ENCODE measurements at regions of chr11 and their contacts with region 1.

Region 1: DNA sequence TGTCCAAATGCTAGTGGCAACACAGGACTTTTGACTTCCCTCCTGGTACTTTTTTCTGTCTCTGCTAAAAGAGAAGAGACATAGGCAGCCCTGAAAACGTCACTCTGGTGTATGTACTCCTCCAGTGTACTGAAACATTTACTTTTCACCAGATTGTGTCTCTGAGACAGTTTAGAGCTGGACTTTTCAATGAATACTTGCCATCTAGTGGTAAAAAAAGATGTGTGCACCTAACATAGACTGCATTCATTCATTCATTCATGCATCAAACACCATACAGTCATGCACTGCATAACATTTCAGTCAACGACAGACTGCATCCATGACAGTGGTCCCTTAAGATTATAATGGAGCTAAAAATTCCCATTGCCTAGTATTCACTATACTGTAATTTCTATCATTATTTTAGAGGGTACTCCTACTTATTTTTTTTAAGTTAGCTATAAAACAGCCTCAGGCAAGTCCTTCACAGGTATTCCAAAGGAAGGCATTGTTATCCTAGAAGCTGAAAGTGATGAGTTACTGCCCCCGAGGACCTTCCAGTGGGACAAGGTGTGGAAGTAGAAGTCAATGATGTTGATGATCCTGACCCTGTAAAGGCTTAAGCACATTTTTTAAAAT is 186.2 kb downstream of the SPON1 start:
- DNase-seq: no peak
- ATAC-seq: peak; percentile 66
- H3K4me3 Mint-ChIP-seq: no peak overlapping the region
- H3K27ac Mint-ChIP-seq: no peak overlapping the region
- H3K4me1 Mint-ChIP-seq: peaks cover 12% of the 10 kb centered on the region
- H3K27me3 Mint-ChIP-seq: no peaks in the 10 kb centered on the region
- CTCF ChIP-seq: peak; percentile 63

Region 2: GRCh38 chr11:13772223-13773046 is 376.3 kb before region 1 on chr11:
- CTCF ChIA-PET with region 1: interaction called, 26 read pairs
- POLR2A ChIA-PET with region 1: no interaction called
- intact Hi-C with region 1: loop called (anchors 10 kb)
- DNase-seq: peak; percentile 8
- ATAC-seq: peak; percentile 65
- H3K4me3 Mint-ChIP-seq: no peak overlapping the region
- H3K27ac Mint-ChIP-seq: no peak overlapping the region
- H3K4me1 Mint-ChIP-seq: no peaks in the 10 kb centered on the region
- H3K27me3 Mint-ChIP-seq: peaks cover 2% of the 10 kb centered on the region
- CTCF ChIP-seq: peak; percentile 75

Region 3: GRCh38 chr11:13955971-13956421 is 192.8 kb before region 1 on chr11:
- CTCF ChIA-PET with region 1: interaction called, 85 read pairs
- POLR2A ChIA-PET with region 1: no interaction called
- intact Hi-C with region 1: loop called (anchors 2 kb)
- DNase-seq: peak; percentile 70
- ATAC-seq: peak; percentile 69
- H3K4me3 Mint-ChIP-seq: no peak overlapping the region
- H3K27ac Mint-ChIP-seq: no peak overlapping the region
- H3K4me1 Mint-ChIP-seq: no peaks in the 10 kb centered on the region
- H3K27me3 Mint-ChIP-seq: peaks cover 8% of the 10 kb centered on the region
- CTCF ChIP-seq: peak; percentile 92

Region 4: GRCh38 chr11:13962562-13963168 is 186.1 kb before region 1 on chr11 and contains the start of gene SPON1:
- CTCF ChIA-PET with region 1: interaction called, 85 read pairs
- POLR2A ChIA-PET with region 1: interaction called, 3 read pairs
- intact Hi-C with region 1: loop called (anchors 2 kb)
- DNase-seq: peak; percentile 63
- ATAC-seq: peak; percentile 83
- H3K4me3 Mint-ChIP-seq: peak within 1 kb of the TSS; percentile 65
- H3K27ac Mint-ChIP-seq: no peak within 1 kb of the TSS
- H3K4me1 Mint-ChIP-seq: peaks cover 8% of the 10 kb centered on the region
- H3K27me3 Mint-ChIP-seq: peaks cover 41% of the 10 kb centered on the region
- CTCF ChIP-seq: no peak
- total RNA-seq, gene SPON1: 0.96 to 1.4 TPM

Region 5: DNA sequence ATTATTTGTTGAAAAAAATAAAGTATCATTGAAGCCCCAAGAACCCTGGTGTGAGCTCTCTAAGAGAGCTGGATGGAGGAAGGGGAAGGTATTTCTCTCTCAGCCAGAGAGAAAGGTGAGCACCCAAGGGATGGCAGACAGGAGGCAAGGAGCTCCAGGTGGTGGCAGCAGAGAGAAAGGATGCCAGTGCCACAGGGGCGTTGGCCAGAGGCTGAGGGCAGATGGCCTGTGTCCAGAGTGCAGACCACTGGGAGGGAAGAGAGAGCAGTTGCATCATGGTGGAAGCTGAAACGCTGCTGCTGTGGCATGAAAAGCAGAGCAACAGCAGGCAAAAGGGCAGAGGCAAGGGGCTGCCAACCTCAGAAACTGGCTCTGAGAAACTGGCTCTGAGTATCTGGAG is 177.8 kb before region 1 on chr11:
- CTCF ChIA-PET with region 1: interaction called, 28 read pairs
- POLR2A ChIA-PET with region 1: no interaction called
- intact Hi-C with region 1: no loop called
- DNase-seq: peak; percentile 30
- ATAC-seq: peak; percentile 27
- H3K4me3 Mint-ChIP-seq: no peak overlapping the region
- H3K27ac Mint-ChIP-seq: no peak overlapping the region
- H3K4me1 Mint-ChIP-seq: peaks cover 16% of the 10 kb centered on the region
- H3K27me3 Mint-ChIP-seq: peaks cover 8% of the 10 kb centered on the region
- CTCF ChIP-seq: peak; percentile 32

Region 6: DNA sequence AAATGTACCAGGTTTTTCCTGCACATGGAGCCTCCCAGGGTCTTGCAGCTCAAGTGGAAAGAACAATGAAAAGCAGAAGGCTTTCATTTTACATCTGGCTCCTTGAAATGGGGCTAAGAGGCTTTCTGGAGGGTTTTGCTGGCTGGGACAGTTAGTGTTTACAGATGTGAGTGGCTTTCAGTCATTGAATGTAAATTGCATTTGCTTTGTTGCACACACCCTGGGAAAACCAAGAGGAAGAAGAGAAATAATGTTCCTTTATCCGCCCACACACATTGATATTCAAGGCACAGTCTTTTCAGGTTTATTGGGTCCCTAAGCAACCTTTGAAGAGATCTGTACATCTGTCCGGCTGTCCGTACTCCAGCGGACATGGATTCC is 41.7 kb before region 1 on chr11:
- CTCF ChIA-PET with region 1: no interaction called
- POLR2A ChIA-PET with region 1: no interaction called
- intact Hi-C with region 1: no loop called
- DNase-seq: no peak
- ATAC-seq: no peak
- H3K4me3 Mint-ChIP-seq: no peak overlapping the region
- H3K27ac Mint-ChIP-seq: no peak overlapping the region
- H3K4me1 Mint-ChIP-seq: peaks cover 11% of the 10 kb centered on the region
- H3K27me3 Mint-ChIP-seq: no peaks in the 10 kb centered on the region
- CTCF ChIP-seq: no peak

Region 7: GRCh38 chr11:14119357-14119756 is 29.4 kb before region 1 on chr11:
- CTCF ChIA-PET with region 1: interaction called, 18 read pairs
- POLR2A ChIA-PET with region 1: no interaction called
- intact Hi-C with region 1: no loop called
- DNase-seq: peak; percentile 59
- ATAC-seq: peak; percentile 97
- H3K4me3 Mint-ChIP-seq: no peak overlapping the region
- H3K27ac Mint-ChIP-seq: no peak overlapping the region
- H3K4me1 Mint-ChIP-seq: peaks cover 13% of the 10 kb centered on the region
- H3K27me3 Mint-ChIP-seq: no peaks in the 10 kb centered on the region
- CTCF ChIP-seq: no peak

Region 8: DNA sequence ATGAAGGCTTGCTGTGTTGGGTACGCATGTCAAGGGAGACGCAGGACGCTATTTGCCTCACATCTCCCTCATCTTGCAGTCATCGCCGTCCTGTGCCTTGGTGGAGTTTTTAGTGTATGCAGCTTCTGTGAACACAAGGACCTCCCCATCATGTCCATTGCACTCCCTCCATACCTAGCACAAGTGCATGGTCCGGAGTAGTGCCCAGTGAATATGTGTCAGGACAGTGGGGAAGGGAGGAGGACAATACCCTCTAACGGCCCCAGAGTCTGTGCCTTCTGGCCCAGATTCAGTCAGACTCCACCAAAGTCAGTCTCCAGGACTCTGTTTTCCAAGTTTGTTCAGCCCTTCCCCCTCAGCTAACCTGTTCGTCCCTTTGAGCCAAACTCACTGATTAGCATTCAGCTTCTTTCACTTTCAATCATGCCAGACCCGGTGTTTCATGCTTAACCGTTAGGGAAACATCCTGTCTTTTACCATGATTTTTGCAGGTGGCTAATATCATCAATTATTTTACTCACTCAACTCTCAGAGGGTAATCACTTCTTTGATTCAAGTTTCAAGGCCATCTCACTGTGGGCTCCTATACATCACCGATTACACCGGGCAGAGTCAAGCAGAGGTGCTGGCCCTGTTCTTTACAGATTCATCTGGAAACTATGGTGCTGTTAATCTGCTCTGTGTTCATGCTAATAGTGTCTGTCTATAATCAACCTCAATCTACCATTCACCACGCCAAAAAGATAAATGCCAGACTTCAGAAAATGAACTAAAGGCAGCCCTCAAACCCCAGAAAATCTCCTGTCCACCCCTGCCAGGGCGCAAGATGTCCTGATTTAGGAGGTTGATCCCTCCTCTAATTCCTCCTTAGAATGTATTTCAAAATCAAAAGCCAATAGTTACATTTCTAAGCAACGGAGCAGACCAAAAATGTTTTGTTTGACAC is 53.8 kb after region 1 on chr11:
- CTCF ChIA-PET with region 1: no interaction called
- POLR2A ChIA-PET with region 1: no interaction called
- intact Hi-C with region 1: no loop called
- DNase-seq: no peak
- ATAC-seq: no peak
- H3K4me3 Mint-ChIP-seq: no peak overlapping the region
- H3K27ac Mint-ChIP-seq: no peak overlapping the region
- H3K4me1 Mint-ChIP-seq: no peaks in the 10 kb centered on the region
- H3K27me3 Mint-ChIP-seq: no peaks in the 10 kb centered on the region
- CTCF ChIP-seq: no peak

Region 9: GRCh38 chr11:14229472-14229871 is 80.7 kb after region 1 on chr11:
- CTCF ChIA-PET with region 1: no interaction called
- POLR2A ChIA-PET with region 1: no interaction called
- intact Hi-C with region 1: no loop called
- DNase-seq: no peak
- ATAC-seq: no peak
- H3K4me3 Mint-ChIP-seq: no peak overlapping the region
- H3K27ac Mint-ChIP-seq: no peak overlapping the region
- H3K4me1 Mint-ChIP-seq: no peaks in the 10 kb centered on the region
- H3K27me3 Mint-ChIP-seq: no peaks in the 10 kb centered on the region
- CTCF ChIP-seq: no peak

Region 10: GRCh38 chr11:14249121-14249963 is 100.6 kb after region 1 on chr11:
- CTCF ChIA-PET with region 1: interaction called, 8 read pairs
- POLR2A ChIA-PET with region 1: no interaction called
- intact Hi-C with region 1: loop called (anchors 5 kb)
- DNase-seq: peak; percentile 75
- ATAC-seq: peak; percentile 68
- H3K4me3 Mint-ChIP-seq: no peak overlapping the region
- H3K27ac Mint-ChIP-seq: no peak overlapping the region
- H3K4me1 Mint-ChIP-seq: peaks cover 19% of the 10 kb centered on the region
- H3K27me3 Mint-ChIP-seq: no peaks in the 10 kb centered on the region
- CTCF ChIP-seq: peak; percentile 97